ENCODE measurements at regions of chr1 and their contacts with region 1.

Region 1: DNA sequence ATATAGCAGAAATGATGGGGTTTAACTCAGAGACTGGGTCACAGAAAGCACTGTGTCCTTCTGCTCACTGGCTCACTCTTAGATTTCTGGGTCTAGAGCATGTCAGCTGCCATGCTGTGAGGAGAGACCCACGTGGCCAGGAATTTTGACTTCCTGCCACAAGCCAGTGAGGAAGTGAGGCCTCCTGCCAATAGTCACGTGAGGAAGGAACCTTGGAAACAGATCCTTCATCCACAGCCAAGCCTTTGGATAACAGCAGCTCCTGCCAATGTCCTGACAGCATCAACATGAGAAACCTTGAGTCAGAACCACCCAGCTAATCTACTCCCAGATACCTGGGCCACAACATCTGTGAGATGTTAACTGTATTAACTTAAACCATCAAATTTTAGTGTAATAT is 114.5 kb upstream of the PLPPR5 start:
- DNase-seq: no peak
- H3K4me3 ChIP-seq: no peak overlapping the region
- H3K27ac ChIP-seq: no peak overlapping the region
- H3K4me1 ChIP-seq: no peaks in the 10 kb centered on the region
- CTCF ChIP-seq: no peak

Region 2: GRCh38 chr1:99051611-99052283 is 67.4 kb before region 1 on chr1:
- CTCF ChIA-PET with region 1: no interaction called
- POLR2A ChIA-PET with region 1: no interaction called
- intact Hi-C with region 1: loop called (anchors 10 kb)
- DNase-seq: no peak
- H3K4me3 ChIP-seq: no peak overlapping the region
- H3K27ac ChIP-seq: no peak overlapping the region
- H3K4me1 ChIP-seq: no peaks in the 10 kb centered on the region
- CTCF ChIP-seq: no peak

Region 3: DNA sequence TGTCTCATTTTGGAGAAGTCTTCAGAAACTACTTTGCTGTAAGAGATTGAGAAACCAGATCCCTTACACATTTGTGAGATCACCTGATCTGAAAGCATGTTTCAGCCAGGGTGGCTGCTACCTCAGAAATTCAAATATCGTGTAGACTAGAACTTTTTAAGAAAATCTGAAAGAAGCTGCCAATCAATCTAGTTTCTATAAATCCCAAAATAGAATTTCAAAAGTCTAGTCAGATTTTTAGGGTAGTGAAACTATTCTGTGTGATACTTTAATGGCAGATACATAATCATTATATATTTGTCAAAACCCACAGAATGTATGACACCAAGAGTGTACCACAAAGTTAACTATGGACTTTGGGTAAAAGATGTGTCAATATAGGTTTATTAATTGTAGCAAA is 34.6 kb before region 1 on chr1:
- CTCF ChIA-PET with region 1: no interaction called
- POLR2A ChIA-PET with region 1: no interaction called
- intact Hi-C with region 1: no loop called
- DNase-seq: no peak
- H3K4me3 ChIP-seq: no peak overlapping the region
- H3K27ac ChIP-seq: no peak overlapping the region
- H3K4me1 ChIP-seq: no peaks in the 10 kb centered on the region
- CTCF ChIP-seq: no peak